Left ventricle myocardium inferior (tissue), 1 donor: ENCODE measurements at regions of chr9 and their contacts with region 1.

Region 1: DNA sequence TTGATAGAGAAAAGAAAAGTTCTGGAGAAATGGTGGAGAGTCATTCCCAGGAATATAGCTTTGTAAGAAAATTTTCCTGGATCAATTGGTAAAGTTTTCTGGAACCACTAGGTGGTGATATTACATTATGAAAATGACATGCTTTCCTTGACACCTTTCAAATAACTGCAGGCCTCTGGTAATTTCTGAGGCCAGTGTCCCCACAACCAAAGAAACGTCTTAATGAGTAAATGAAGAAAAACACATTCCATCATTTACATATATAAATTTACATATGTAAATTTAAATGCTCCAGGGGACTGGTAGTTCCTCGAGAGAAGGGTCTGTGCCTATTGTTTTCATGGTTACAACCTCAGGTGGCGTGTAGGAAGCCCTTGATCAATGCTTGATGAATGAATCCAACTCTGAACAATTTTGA is 17.2 kb upstream of the RGS3 start:
- DNase-seq: no peak
- H3K4me3 ChIP-seq: no peak overlapping the region
- H3K27ac ChIP-seq: peak overlapping the region; percentile 72
- H3K4me1 ChIP-seq: peaks cover 14% of the 10 kb centered on the region
- H3K27me3 ChIP-seq: no peaks in the 10 kb centered on the region
- CTCF ChIP-seq: peak; percentile 76

Region 2: GRCh38 chr9:113380869-113381378 is 65.4 kb before region 1 on chr9:
- intact Hi-C with region 1: no loop called
- DNase-seq: no peak
- H3K4me3 ChIP-seq: no peak overlapping the region
- H3K27ac ChIP-seq: no peak overlapping the region
- H3K4me1 ChIP-seq: peaks cover 8% of the 10 kb centered on the region
- H3K27me3 ChIP-seq: no peaks in the 10 kb centered on the region
- CTCF ChIP-seq: no peak

Region 3: GRCh38 chr9:113591001-113591898 is 144.9 kb after region 1 on chr9:
- intact Hi-C with region 1: loop called (anchors 5 kb)
- DNase-seq: peak; percentile 85
- H3K4me3 ChIP-seq: no peak overlapping the region
- H3K27ac ChIP-seq: peak overlapping the region; percentile 94
- H3K4me1 ChIP-seq: peaks cover 97% of the 10 kb centered on the region
- H3K27me3 ChIP-seq: no peaks in the 10 kb centered on the region
- CTCF ChIP-seq: peak; percentile 96